CD4-positive, alpha-beta T cell (primary cell): ENCODE measurements at regions of chr19 and their contacts with region 1.

Region 1: GRCh38 chr19:11374433-11375142 is at the start of gene SWSAP1:
- DNase-seq: peak; percentile 93 to 100 (median 95)
- ATAC-seq: peak; percentile 87
- H3K4me3 ChIP-seq: peak within 1 kb of the TSS; percentile 87
- H3K4me3 Mint-ChIP-seq: no peak within 1 kb of the TSS
- H3K27ac ChIP-seq: peak within 1 kb of the TSS; percentile 97 to 99
- H3K27ac Mint-ChIP-seq: no peak within 1 kb of the TSS
- H3K4me1 ChIP-seq: peaks cover 45% of the 10 kb centered on the region
- H3K4me1 Mint-ChIP-seq: peaks cover 21% of the 10 kb centered on the region
- H3K27me3 ChIP-seq: no peaks in the 10 kb centered on the region
- H3K27me3 Mint-ChIP-seq: no peaks in the 10 kb centered on the region
- CTCF ChIP-seq: no peak
- total RNA-seq, gene SWSAP1: 2.6 to 2.7 TPM

Region 2: DNA sequence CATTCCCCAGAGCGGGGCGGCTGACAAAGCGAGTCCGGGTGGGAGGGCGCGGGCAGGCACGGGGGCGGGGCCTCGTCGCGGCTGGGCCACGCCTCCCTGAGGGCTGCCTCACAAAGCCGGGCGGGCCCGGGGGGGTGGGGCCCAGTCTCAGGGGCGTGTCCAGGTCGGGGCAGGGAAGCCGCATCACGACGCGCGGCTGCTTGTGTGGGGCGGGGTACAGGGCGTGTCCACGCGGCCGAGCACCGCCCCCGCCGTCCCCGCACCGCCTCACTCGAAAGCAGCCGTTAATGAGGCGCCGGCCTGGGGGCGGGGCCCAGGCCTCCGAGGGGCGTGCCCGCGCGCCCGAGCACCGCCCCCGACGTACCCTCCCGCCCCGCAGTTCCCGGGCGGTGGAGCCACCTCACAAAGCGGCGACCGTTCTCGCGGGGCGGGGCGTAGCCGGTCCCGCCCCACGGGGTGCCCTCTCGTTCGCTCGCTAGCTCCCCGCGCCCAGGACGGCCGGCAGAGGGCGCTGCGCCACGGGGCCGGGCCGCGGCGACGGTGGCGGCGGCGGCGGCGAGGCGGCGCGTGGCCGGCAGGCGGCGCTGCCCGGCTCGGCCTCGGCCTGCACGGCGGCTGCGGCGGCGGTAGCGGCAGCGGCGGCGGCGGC is 503.5 kb before region 1 on chr19 and contains the start of gene CARM1:
- CTCF ChIA-PET with region 1: no interaction called
- POLR2A ChIA-PET with region 1: no interaction called
- intact Hi-C with region 1: loop called in 1 of 2 experiments (anchors 5 kb)
- DNase-seq: peak; percentile 98 to 100 (median 99)
- ATAC-seq: peak; percentile 83
- H3K4me3 ChIP-seq: peak within 1 kb of the TSS; percentile 69
- H3K4me3 Mint-ChIP-seq: peak within 1 kb of the TSS; percentile 86
- H3K27ac ChIP-seq: peak within 1 kb of the TSS in 1 of 2 donors; percentile 57
- H3K27ac Mint-ChIP-seq: peak within 1 kb of the TSS; percentile 54
- H3K4me1 ChIP-seq: peaks cover 26% of the 10 kb centered on the region
- H3K4me1 Mint-ChIP-seq: peaks cover 18% of the 10 kb centered on the region
- H3K27me3 ChIP-seq: no peaks in the 10 kb centered on the region
- H3K27me3 Mint-ChIP-seq: no peaks in the 10 kb centered on the region
- CTCF ChIP-seq: peak; percentile 34
- total RNA-seq, gene CARM1: 17.5 to 18.0 TPM

Region 3: DNA sequence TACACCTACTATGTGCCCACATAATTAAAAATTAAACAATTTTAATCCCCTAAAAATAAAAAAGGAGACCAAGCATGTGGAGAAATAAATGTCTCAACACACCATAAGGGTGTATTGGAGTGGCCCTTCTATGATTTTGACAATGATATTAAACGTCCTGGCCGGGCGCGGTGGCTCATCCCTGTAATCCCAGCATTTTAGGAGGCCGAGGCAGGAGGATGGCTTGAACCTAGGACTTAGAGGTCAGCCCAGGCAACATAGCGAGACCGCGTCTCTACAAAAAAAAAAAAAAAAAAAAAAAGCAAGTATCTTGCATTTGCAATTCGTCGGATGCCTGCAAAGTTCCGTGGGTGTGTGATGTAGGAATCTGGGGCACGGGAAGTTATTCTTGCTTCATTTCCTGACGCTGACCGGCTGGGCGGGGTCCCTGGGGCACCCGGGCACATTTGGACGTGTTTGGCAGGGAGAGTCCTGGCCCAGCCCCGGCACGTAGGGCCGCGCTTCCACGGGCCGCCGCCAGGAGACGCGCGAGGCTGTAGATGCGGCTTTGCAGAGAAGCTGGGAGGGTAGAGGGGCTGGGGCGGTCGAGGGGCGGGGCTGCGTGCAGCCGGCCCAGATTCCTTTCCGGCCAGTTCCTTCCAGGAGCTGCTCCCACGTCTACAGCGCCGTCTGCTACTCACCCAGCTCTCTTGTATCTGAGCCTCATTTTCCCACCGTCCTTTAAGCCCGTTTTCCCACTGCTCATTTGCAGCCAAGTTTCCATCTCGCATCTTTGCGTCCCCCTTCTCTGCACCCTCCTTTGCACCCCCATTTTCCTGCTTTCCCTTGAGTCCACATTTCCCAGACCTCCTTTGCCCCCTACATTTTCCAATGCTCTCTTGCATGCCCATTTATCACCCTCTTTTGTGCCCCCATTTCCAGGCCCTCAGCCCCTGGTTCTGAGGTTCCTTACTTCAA is 80.9 kb before region 1 on chr19:
- CTCF ChIA-PET with region 1: interaction called, 16 read pairs
- POLR2A ChIA-PET with region 1: interaction called, 7 read pairs
- intact Hi-C with region 1: no loop called
- DNase-seq: peak; percentile 57 to 87 (median 77)
- ATAC-seq: peak; percentile 98
- H3K4me3 ChIP-seq: no peak overlapping the region
- H3K4me3 Mint-ChIP-seq: no peak overlapping the region
- H3K27ac ChIP-seq: no peak overlapping the region
- H3K27ac Mint-ChIP-seq: no peak overlapping the region
- H3K4me1 ChIP-seq: peaks cover 11% of the 10 kb centered on the region
- H3K4me1 Mint-ChIP-seq: peaks cover 9% of the 10 kb centered on the region
- H3K27me3 ChIP-seq: peaks cover 14 to 16% of the 10 kb centered on the region in 2 experiments
- H3K27me3 Mint-ChIP-seq: peaks cover 39% of the 10 kb centered on the region
- CTCF ChIP-seq: peak; percentile 86

Region 4: GRCh38 chr19:11346092-11346940 is 28.3 kb before region 1 on chr19 and contains the starts of genes CCDC159 and TMEM205:
- CTCF ChIA-PET with region 1: interaction called, 3 read pairs
- POLR2A ChIA-PET with region 1: interaction called, 86 read pairs
- intact Hi-C with region 1: loop called (anchors 1 to 2 kb)
- DNase-seq: peak; percentile 96 to 99 (median 98)
- ATAC-seq: peak; percentile 98
- H3K4me3 ChIP-seq: peak within 1 kb of the TSS; percentile 75
- H3K4me3 Mint-ChIP-seq: peak within 1 kb of the TSS; percentile 89
- H3K27ac ChIP-seq: peak within 1 kb of the TSS; percentile 36 to 69
- H3K27ac Mint-ChIP-seq: peak within 1 kb of the TSS; percentile 74
- H3K4me1 ChIP-seq: peaks cover 29% of the 10 kb centered on the region
- H3K4me1 Mint-ChIP-seq: peaks cover 28% of the 10 kb centered on the region
- H3K27me3 ChIP-seq: no peaks in the 10 kb centered on the region
- H3K27me3 Mint-ChIP-seq: no peaks in the 10 kb centered on the region
- CTCF ChIP-seq: no peak
- total RNA-seq, gene CCDC159: 35.5 to 42.4 TPM
- total RNA-seq, gene TMEM205: 8.8 to 10.4 TPM

Region 5: DNA sequence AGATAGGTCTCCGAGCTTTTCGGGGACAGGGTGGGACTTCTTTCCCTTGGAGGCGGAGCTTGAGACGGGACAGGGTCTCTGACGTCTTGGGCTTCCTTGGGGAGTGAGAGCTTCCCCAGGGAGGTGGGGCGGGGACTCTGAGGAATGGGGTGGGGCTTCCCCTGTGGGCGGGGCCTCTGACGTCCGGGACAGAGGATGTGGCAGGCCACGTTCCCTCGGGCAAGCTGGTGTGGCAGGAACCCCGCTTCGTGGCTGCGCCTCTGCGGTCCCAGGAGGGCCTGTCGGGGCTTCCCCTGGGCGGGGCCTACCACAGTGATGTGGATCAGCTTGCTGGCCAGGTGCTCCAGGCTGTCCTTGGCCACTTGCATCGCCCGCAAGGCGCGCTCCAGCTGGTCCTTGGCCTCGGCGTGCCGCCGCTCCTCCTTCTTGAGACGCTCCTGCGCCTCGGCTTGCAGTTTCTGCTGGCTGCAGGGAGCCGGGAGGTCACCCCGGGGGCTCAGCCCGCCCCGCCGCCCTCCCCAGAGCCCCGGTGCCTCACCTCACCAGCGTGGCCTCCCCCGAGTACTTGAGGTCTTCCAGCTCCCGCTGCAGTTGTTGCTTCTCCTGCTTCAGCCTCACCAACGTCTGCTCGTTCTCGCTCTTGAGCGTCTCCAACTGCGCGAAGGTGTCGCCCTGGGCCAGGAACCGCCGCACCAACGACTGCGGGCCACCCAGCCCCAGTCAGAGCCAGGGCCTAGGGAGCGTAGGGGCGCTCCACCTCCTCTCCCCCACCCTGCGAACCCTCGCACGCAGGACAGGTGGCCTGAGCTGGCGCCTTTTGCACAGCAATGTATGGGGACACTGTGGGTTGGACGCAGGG is 47.8 kb after region 1 on chr19:
- CTCF ChIA-PET with region 1: no interaction called
- POLR2A ChIA-PET with region 1: interaction called, 19 read pairs
- intact Hi-C with region 1: no loop called
- DNase-seq: peak; percentile 24 to 85 (median 48)
- ATAC-seq: peak; percentile 59
- H3K4me3 ChIP-seq: peak overlapping the region; percentile 37
- H3K4me3 Mint-ChIP-seq: peak overlapping the region; percentile 83
- H3K27ac ChIP-seq: no peak overlapping the region
- H3K27ac Mint-ChIP-seq: no peak overlapping the region
- H3K4me1 ChIP-seq: peaks cover 52% of the 10 kb centered on the region
- H3K4me1 Mint-ChIP-seq: peaks cover 43% of the 10 kb centered on the region
- H3K27me3 ChIP-seq: peaks cover 51 to 57% of the 10 kb centered on the region in 2 experiments
- H3K27me3 Mint-ChIP-seq: peaks cover 62% of the 10 kb centered on the region
- CTCF ChIP-seq: no peak

Region 6: DNA sequence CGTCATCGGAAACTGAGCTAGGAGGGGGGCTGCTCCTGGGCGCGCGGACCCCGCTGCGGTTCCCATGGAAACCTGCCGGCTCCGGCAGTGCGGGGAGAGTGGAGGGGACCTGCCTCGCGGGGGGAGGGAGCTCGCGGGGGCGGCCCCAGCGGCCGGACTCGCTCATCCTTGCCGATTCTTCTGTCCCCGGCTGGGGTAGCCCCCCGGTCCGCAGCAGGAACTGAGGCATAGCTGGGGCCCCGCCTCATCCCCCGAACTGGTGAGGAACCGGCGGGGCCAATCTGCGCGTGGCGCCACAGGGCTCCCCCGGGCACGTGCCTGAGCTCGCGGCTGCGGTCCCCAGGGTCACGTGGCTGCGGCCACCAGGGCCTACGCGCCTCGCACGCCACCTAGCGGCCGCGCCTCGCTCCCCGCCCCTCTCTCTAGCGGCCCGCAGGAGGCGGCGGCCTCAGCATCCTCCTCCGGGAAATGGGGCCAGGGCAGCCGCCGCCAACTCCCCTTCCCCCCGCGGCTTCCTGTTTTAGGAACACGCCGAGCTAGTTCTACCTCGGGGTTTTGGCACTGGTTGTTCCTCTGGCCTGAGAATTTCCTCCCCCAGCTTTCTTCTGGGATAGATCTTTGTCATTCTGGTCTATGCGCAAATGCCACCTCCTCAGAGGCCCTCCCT is 107.9 kb after region 1 on chr19:
- CTCF ChIA-PET with region 1: interaction called, 9 read pairs
- POLR2A ChIA-PET with region 1: interaction called, 15 read pairs
- intact Hi-C with region 1: no loop called
- DNase-seq: peak; percentile 58 to 95 (median 78)
- ATAC-seq: peak; percentile 73
- H3K4me3 ChIP-seq: peak overlapping the region; percentile 7
- H3K4me3 Mint-ChIP-seq: peak overlapping the region; percentile 2
- H3K27ac ChIP-seq: no peak overlapping the region
- H3K27ac Mint-ChIP-seq: no peak overlapping the region
- H3K4me1 ChIP-seq: peaks cover 36% of the 10 kb centered on the region
- H3K4me1 Mint-ChIP-seq: peaks cover 22% of the 10 kb centered on the region
- H3K27me3 ChIP-seq: peaks cover 27 to 35% of the 10 kb centered on the region in 2 experiments
- H3K27me3 Mint-ChIP-seq: peaks cover 52% of the 10 kb centered on the region
- CTCF ChIP-seq: peak; percentile 82

Region 7: GRCh38 chr19:11494634-11495285 is 120.2 kb after region 1 on chr19:
- CTCF ChIA-PET with region 1: no interaction called
- POLR2A ChIA-PET with region 1: no interaction called
- intact Hi-C with region 1: no loop called
- DNase-seq: no peak
- ATAC-seq: no peak
- H3K4me3 ChIP-seq: no peak overlapping the region
- H3K4me3 Mint-ChIP-seq: no peak overlapping the region
- H3K27ac ChIP-seq: no peak overlapping the region
- H3K27ac Mint-ChIP-seq: no peak overlapping the region
- H3K4me1 ChIP-seq: no peaks in the 10 kb centered on the region
- H3K4me1 Mint-ChIP-seq: no peaks in the 10 kb centered on the region
- H3K27me3 ChIP-seq: no peaks in the 10 kb centered on the region
- H3K27me3 Mint-ChIP-seq: no peaks in the 10 kb centered on the region
- CTCF ChIP-seq: no peak

Region 8: GRCh38 chr19:11528551-11529341 is 154.2 kb after region 1 on chr19 and contains the start of gene ECSIT:
- CTCF ChIA-PET with region 1: no interaction called
- POLR2A ChIA-PET with region 1: interaction called, 10 read pairs
- intact Hi-C with region 1: no loop called
- DNase-seq: peak; percentile 85 to 96 (median 88)
- ATAC-seq: peak; percentile 99
- H3K4me3 ChIP-seq: peak within 1 kb of the TSS; percentile 70
- H3K4me3 Mint-ChIP-seq: peak within 1 kb of the TSS; percentile 97
- H3K27ac ChIP-seq: peak within 1 kb of the TSS; percentile 71 to 78
- H3K27ac Mint-ChIP-seq: peak within 1 kb of the TSS; percentile 93
- H3K4me1 ChIP-seq: peaks cover 19% of the 10 kb centered on the region
- H3K4me1 Mint-ChIP-seq: peaks cover 20% of the 10 kb centered on the region
- H3K27me3 ChIP-seq: no peaks in the 10 kb centered on the region
- H3K27me3 Mint-ChIP-seq: no peaks in the 10 kb centered on the region
- CTCF ChIP-seq: no peak
- total RNA-seq, gene ECSIT: 27.2 to 27.4 TPM